ENCODE measurements at regions of chr12 and their contacts with region 1.

Region 1: DNA sequence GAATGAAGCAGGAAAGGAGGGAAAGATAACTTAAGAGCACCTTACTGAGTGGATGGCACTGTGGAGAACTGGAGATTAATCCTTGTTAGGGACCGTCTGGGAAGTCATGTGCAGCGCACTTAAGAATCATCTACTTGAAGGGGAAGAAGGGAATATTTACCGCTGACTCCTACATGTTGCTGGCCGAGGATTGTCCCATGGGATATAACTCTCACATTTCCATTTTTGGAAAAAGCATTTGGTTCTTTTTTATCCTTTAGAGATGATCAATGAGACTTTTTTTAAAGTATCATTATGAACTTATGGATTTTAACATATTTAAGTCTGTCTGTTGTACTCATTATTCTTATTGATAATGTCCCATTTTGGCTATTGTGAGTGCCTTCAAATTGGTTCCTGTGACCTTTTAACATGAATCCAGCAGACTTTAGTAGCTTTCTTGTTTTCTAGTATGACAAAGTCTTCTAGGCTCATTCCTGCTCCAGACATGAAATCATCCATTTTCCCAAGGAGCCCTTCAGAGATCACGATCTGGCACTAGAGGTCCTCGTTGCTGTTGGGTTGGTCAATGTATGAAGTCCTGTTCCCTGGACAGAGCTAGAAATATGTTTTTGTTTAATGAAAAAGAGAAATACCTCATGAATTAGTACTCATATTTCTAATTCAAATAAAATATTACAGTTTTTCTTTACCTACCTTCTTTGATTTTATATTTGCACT is 20.2 kb upstream of the FAM234B start:
- DNase-seq: peak; percentile 54 to 57
- H3K4me3 ChIP-seq: no peak overlapping the region
- H3K27ac ChIP-seq: no peak overlapping the region
- H3K4me1 ChIP-seq: no peaks in the 10 kb centered on the region
- H3K27me3 ChIP-seq: no peaks in the 10 kb centered on the region
- CTCF ChIP-seq: peak; percentile 69

Region 2: DNA sequence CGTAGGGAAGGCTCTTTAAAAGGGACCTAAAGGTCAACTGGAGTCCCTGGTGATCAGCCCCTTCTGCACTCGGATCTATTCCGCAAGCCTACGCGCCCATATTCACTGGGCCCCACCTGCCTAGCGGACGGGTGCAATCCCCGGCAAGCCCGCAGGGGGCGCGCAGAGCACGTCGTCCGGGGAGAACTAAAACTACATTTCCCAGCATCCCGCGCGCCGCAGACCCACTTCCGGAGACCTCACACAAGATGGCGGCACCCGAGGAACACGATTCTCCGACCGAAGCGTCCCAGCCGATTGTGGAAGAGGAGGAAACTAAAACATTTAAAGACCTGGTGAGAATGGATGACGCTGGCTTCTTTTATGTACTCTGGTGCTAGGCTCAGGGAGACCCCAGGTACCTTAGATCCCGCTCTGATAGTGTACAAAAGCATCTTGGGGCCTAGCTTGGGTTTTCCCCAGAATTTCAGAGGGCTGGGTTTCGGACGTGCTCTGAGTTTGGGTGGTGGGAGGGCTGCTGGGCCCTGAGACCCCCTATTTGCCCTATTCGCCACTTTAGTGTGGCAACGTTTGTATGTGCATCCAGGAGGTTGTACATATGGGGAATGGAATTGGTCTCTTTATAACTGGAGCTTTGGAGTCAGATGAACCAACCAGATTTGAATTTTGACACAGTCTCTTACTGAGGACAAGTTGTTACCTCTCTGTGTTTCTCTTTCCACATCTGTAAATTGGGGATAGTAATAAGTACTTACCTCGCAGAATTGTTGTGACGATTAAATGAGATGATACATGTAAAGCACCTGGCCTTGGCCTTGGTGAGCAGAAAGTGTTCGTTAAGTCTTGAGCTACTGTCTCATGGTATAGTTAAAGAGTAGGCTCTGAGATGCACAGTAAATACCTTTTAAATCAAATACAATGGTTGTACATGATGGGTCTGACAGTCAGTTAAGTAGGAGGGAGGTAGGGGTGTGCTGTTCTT is 210.6 kb before region 1 on chr12 and contains the start of gene DDX47:
- CTCF ChIA-PET with region 1: interaction called, 3 read pairs
- POLR2A ChIA-PET with region 1: no interaction called
- intact Hi-C with region 1: loop called (anchors 1 kb)
- DNase-seq: peak; percentile 81 to 98
- H3K4me3 ChIP-seq: peak within 1 kb of the TSS; percentile 67
- H3K27ac ChIP-seq: peak within 1 kb of the TSS; percentile 81
- H3K4me1 ChIP-seq: peaks cover 64% of the 10 kb centered on the region
- H3K27me3 ChIP-seq: no peaks in the 10 kb centered on the region
- CTCF ChIP-seq: peak; percentile 93
- total RNA-seq, gene DDX47: 192 and 196 TPM in 2 replicates

Region 3: GRCh38 chr12:13203034-13203922 is 179.3 kb after region 1 on chr12:
- CTCF ChIA-PET with region 1: interaction called, 8 read pairs
- POLR2A ChIA-PET with region 1: interaction called, 4 read pairs
- intact Hi-C with region 1: loop called (anchors 1 kb)
- DNase-seq: peak in 1 of 2 experiments; percentile 83
- H3K4me3 ChIP-seq: peak overlapping the region; percentile 32; the same call in 1 of the 2 replicates
- H3K27ac ChIP-seq: peak overlapping the region; percentile 99
- H3K4me1 ChIP-seq: peaks cover 97% of the 10 kb centered on the region
- H3K27me3 ChIP-seq: no peaks in the 10 kb centered on the region
- CTCF ChIP-seq: no peak

Region 4: GRCh38 chr12:13233830-13234641 is 210.1 kb after region 1 on chr12:
- CTCF ChIA-PET with region 1: no interaction called
- POLR2A ChIA-PET with region 1: no interaction called
- intact Hi-C with region 1: loop called (anchors 1 kb)
- DNase-seq: peak in 1 of 2 experiments; percentile 62
- H3K4me3 ChIP-seq: no peak overlapping the region
- H3K27ac ChIP-seq: no peak overlapping the region
- H3K4me1 ChIP-seq: peaks cover 8% of the 10 kb centered on the region; the same call in 1 of the 2 replicates
- H3K27me3 ChIP-seq: no peaks in the 10 kb centered on the region
- CTCF ChIP-seq: peak; percentile 96

Region 5: GRCh38 chr12:13362260-13362841 is 338.4 kb after region 1 on chr12:
- CTCF ChIA-PET with region 1: interaction called, 3 read pairs
- POLR2A ChIA-PET with region 1: no interaction called
- intact Hi-C with region 1: loop called (anchors 5 kb)
- DNase-seq: peak in 1 of 2 experiments; percentile 82
- H3K4me3 ChIP-seq: no peak overlapping the region
- H3K27ac ChIP-seq: no peak overlapping the region
- H3K4me1 ChIP-seq: no peaks in the 10 kb centered on the region
- H3K27me3 ChIP-seq: no peaks in the 10 kb centered on the region
- CTCF ChIP-seq: peak; percentile 72

Region 6: DNA sequence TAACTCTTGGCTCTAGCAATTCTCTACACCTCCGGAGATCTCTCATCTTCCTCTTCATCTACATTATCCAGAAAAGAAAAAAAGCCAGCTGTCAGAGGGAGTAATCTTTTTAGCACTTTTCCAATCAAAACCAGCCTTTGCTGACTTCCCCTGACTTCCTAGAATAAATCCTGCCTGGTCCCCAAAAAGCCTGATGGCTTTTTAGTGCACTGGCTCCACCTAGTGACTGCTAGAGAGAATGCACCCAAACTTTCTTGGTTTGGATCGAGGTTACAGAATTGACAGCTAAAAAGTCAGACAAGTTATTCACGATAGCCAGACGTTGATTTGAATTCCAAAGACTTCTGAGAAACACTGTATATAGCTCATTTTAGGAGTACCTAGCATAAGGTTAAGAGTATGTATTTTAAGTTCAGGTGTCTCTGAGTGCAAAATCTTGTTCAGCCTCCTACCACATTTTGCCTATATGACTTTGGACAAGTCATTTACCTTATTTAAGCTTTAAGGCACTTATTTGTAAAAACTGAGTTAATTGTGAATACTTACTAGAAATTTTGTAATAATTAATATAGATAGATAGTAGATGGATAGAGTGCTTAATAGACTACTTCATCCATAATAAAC is 1143.1 kb after region 1 on chr12:
- CTCF ChIA-PET with region 1: interaction called, 3 read pairs
- POLR2A ChIA-PET with region 1: no interaction called
- intact Hi-C with region 1: loop called (anchors 10 kb)
- DNase-seq: peak; percentile 46 to 61
- H3K4me3 ChIP-seq: no peak overlapping the region
- H3K27ac ChIP-seq: no peak overlapping the region
- H3K4me1 ChIP-seq: no peaks in the 10 kb centered on the region
- H3K27me3 ChIP-seq: no peaks in the 10 kb centered on the region
- CTCF ChIP-seq: peak; percentile 98